ENCODE measurements at regions of chr1 and their contacts with region 1.

Region 1: DNA sequence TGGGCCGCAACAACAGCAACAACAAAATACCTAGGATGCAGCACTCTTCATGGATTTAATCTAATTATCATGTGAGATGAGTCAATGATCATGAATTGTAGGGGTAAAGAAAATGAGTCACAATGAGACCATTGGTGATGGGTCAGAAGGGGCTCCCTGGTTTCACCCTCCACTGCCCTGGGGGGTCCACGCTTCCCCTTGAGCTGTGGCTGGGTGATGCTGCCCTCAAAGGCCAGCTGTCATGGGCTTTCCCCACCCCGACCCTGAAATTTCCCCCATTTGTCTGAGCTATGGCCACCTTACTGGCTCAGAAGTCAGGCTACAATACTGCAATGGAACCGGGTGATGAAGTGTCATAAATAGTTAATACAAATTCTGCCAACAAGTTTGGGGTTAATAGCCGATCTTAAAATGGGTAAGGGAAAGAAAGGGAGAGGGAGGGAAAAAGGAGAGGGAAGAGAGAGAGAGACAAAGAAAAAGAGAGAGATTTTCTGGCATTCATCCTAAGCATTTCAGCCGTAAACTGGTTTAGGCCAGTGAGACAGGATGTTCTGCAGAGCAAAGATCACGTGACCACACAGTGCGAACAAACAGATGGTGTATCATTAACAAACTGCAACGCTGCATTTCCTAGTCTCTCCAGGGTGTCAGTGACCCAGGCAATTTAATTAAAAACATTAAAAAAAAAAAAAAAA is 143.4 kb upstream of the ERRFI1 start:
- DNase-seq: no peak
- ATAC-seq: peak; percentile 26; the same call in 1 of the 2 replicates
- H3K4me3 ChIP-seq: no peak overlapping the region
- H3K27ac ChIP-seq: peak overlapping the region; percentile 96
- H3K4me1 ChIP-seq: peaks cover 71 to 94% of the 10 kb centered on the region in 2 experiments
- H3K27me3 ChIP-seq: no peaks in the 10 kb centered on the region
- CTCF ChIP-seq: no peak
- POLR2A ChIP-seq: peak; percentile 26
- RAD21 ChIP-seq: no peak

Region 2: DNA sequence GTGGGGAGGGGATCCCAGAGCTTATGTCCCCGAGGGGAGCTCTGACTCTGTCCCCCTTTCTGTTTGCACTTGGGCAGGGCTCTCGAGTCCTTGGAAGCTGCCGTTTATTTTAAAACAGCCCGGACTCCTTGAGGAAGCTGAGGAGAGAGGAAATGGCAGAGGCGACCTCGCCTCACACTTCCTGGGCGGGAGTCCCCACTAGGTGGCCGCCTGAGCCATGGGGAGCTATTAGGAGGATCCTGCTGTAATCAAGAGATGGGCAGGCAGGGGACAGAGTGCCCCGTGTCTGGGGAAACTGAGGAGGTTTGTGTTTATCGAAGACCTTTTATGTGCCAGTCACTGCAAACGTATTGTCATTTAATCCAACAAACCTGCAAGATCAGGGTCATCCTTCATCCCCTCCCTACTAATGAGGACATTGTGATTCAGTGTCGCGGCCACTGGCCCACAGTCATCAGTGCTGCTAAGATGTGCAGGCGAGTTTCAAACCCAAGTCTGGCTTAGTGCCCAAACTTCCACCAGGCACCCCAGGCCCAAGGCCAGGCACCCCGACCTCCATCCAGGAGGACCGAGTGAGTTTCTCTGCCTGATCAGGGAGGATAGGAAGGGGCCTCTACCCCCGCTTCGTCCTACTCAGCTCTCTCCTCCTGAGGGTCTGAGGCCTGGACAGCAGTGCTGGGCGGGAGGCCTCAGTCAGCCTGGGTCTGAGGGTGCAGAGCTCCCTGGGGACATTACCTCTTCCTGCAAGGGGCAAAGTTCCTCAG is 715.3 kb before region 1 on chr1:
- CTCF ChIA-PET with region 1: no interaction called
- POLR2A ChIA-PET with region 1: no interaction called
- RAD21 ChIA-PET with region 1: no interaction called
- intact Hi-C with region 1: no loop called
- DNase-seq: no peak
- ATAC-seq: peak; percentile 95
- H3K4me3 ChIP-seq: no peak overlapping the region
- H3K27ac ChIP-seq: no peak overlapping the region
- H3K4me1 ChIP-seq: peaks cover 0 to 7% of the 10 kb centered on the region in 2 experiments; a peak in 2 of 4 replicates
- H3K27me3 ChIP-seq: no peaks in the 10 kb centered on the region
- CTCF ChIP-seq: peak; percentile 62 to 83 (median 68); a peak in 5 of 6 replicates
- POLR2A ChIP-seq: no peak
- RAD21 ChIP-seq: peak; percentile 81

Region 3: DNA sequence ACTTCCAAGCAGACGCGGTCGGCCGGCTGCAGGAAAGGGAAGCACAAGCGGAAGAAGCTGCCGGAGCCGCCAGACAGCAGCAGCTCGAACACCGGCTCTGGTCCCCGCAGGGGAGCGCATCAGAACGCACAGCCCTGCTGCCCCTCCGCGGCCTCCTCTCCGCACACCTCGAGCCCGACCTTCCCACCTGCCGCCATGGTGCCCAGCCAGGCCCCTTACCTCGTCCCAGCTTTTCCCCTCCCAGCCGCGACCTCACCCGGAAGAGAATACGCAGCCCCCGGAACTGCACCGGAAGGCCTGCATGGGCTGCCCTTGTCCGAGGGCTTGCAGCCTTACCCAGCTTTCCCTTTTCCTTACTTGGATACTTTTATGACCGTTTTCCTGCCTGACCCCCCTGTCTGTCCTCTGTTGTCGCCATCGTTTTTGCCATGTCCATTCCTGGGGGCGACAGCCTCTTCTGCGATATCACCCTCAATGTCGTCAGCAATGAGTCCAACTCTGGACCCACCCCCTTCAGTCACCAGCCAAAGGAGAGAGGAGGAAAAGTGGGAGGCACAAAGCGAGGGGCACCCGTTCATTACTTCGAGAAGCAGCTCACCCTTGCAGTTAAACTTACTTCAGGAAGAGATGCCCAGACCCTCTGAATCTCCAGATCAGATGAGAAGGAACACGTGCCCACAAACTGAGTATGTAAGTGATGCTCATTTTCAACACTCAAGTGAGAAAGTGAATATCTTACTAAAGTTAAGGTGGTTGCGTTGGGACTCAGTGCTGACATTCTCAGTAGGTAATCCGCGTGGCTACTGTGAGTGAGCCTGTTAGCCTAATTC is 342.2 kb before region 1 on chr1:
- CTCF ChIA-PET with region 1: no interaction called
- POLR2A ChIA-PET with region 1: no interaction called
- RAD21 ChIA-PET with region 1: no interaction called
- intact Hi-C with region 1: no loop called
- DNase-seq: no peak
- ATAC-seq: no peak
- H3K4me3 ChIP-seq: no peak overlapping the region
- H3K27ac ChIP-seq: no peak overlapping the region
- H3K4me1 ChIP-seq: no peaks in the 10 kb centered on the region
- H3K27me3 ChIP-seq: no peaks in the 10 kb centered on the region
- CTCF ChIP-seq: no peak
- POLR2A ChIP-seq: no peak
- RAD21 ChIP-seq: no peak

Region 4: GRCh38 chr1:8047681-8048445 is 121.6 kb before region 1 on chr1:
- CTCF ChIA-PET with region 1: no interaction called
- POLR2A ChIA-PET with region 1: interaction called, 5 read pairs
- RAD21 ChIA-PET with region 1: interaction called in 1 of 2 experiments, 3 read pairs
- intact Hi-C with region 1: loop called (anchors 5 kb)
- DNase-seq: peak; percentile 81
- ATAC-seq: peak; percentile 56
- H3K4me3 ChIP-seq: peak overlapping the region in 1 of 2 experiments; percentile 5; a peak in 1 of 4 replicates
- H3K27ac ChIP-seq: peak overlapping the region; percentile 92
- H3K4me1 ChIP-seq: peaks cover 70 to 85% of the 10 kb centered on the region in 2 experiments
- H3K27me3 ChIP-seq: no peaks in the 10 kb centered on the region
- CTCF ChIP-seq: no peak
- POLR2A ChIP-seq: no peak
- RAD21 ChIP-seq: no peak; the same call in 1 of the 2 replicates

Region 5: DNA sequence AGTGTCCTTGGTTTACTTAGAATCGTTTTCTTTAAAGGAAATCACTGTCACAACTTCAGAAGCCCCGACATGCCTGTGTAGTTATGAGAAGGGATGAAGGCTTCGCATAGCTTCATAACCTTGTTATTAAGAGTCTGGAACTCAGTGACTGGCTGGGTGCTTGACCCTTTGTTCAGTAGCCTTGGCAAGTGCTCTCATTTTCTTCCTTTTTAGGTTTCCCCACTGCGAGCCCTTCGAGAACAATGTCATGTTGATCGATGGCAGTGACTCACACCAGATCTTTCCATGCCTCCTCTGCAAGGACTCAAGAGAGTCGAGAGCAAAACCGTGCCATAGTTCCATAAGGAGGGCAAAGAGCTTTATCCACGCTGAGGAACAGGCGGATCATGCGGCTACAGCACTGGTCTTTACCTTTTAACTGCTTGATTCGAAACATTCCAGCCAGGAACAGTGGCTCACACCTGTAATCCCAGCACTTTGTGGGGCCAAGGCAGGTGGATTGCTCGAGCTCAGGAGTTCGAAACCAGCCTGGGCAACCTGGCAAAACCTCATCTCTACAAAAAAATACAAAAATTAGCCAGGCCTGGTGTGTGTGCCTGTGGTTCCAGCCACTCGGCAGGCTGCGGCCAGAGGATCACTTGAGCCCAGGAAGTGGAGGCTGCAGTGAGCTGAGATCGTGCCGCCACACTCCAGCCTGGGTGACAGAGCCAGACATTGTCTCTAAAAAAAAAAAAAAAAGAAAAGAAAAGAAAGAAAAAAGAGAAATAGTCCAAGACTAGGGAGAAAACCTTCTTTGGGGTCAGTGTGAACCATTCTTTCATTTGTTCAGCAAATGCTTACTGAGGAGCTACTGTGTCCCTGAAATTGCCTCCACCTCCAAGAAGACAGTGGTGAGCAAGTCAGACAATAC is 48.0 kb before region 1 on chr1:
- CTCF ChIA-PET with region 1: interaction called, 4 read pairs
- POLR2A ChIA-PET with region 1: interaction called, 31 read pairs
- RAD21 ChIA-PET with region 1: interaction called, 3 to 8 read pairs
- intact Hi-C with region 1: no loop called
- DNase-seq: peak; percentile 95
- ATAC-seq: peak; percentile 65
- H3K4me3 ChIP-seq: peak overlapping the region in 1 of 2 experiments; percentile 15; a peak in 1 of 4 replicates
- H3K27ac ChIP-seq: peak overlapping the region; percentile 99
- H3K4me1 ChIP-seq: peaks cover 72 to 83% of the 10 kb centered on the region in 2 experiments
- H3K27me3 ChIP-seq: no peaks in the 10 kb centered on the region
- CTCF ChIP-seq: no peak
- POLR2A ChIP-seq: no peak
- RAD21 ChIP-seq: no peak

Region 6: DNA sequence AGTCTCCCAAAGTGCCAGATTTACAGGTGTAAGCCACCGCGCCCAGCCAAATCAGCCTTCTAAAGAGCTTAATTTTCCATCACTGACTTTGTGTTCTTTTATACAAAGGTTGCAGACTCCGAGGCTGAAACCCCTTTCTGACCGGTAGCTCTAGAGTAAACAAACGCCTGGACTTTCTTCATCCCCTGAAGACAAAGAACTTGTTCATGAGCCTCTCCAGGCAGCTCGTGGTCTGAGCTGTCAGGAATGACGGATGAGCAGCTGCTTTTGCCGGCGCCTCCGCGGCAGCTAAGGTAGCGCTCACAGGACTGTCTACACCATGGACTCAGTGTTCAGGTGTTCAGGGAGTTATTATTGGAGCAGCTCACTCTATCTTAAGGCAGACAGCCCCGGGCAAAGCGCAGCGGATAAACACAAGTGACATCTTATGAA is 14.9 kb before region 1 on chr1:
- CTCF ChIA-PET with region 1: interaction called, 4 read pairs
- POLR2A ChIA-PET with region 1: interaction called, 77 read pairs
- RAD21 ChIA-PET with region 1: interaction called in 1 of 2 experiments, 3 read pairs
- intact Hi-C with region 1: no loop called
- DNase-seq: peak; percentile 85
- ATAC-seq: peak; percentile 84
- H3K4me3 ChIP-seq: peak overlapping the region in 1 of 2 experiments; percentile 33; a peak in 2 of 4 replicates
- H3K27ac ChIP-seq: peak overlapping the region; percentile 85
- H3K4me1 ChIP-seq: peaks cover 37 to 38% of the 10 kb centered on the region in 2 experiments
- H3K27me3 ChIP-seq: no peaks in the 10 kb centered on the region
- CTCF ChIP-seq: no peak
- POLR2A ChIP-seq: no peak
- RAD21 ChIP-seq: peak; percentile 16; the same call in 1 of the 2 replicates

Measured in HCT116 (cell line).